Endothelial cell of umbilical vein (primary cell): ENCODE measurements at regions of chr11 and their contacts with region 1.

Region 1: DNA sequence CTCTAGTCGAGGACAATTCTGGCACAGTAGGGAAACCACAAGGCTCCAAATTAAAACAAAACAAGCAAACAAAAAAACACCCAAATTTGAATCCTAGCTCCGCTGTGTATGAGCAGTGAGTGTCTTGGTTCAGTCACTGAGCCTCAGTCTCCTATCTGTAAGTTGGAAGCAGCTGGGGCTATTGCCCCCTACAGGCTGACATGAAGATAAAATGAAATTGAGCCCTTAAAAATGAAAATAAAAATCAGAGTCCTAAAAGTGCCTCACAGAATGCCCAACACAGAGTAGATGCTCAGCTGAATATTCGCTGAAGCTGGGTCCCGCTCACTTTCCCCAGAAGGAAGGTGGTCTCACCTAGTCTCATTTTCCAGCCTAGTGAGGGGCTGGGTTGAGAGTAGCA is 65.2 kb downstream of the PDE2A start:
- DNase-seq: peak; percentile 21
- H3K4me3 ChIP-seq: no peak overlapping the region
- H3K27ac ChIP-seq: no peak overlapping the region
- H3K4me1 ChIP-seq: no peaks in the 10 kb centered on the region
- H3K27me3 ChIP-seq: no peaks in the 10 kb centered on the region
- CTCF ChIP-seq: peak; percentile 56 to 58
- POLR2A ChIP-seq: no peak

Region 2: GRCh38 chr11:72534565-72535547 is 74.2 kb before region 1 on chr11:
- CTCF ChIA-PET with region 1: no interaction called
- POLR2A ChIA-PET with region 1: no interaction called
- dilution Hi-C with region 1: no loop called
- intact Hi-C with region 1: no loop called
- DNase-seq: no peak
- H3K4me3 ChIP-seq: no peak overlapping the region
- H3K27ac ChIP-seq: no peak overlapping the region
- H3K4me1 ChIP-seq: no peaks in the 10 kb centered on the region
- H3K27me3 ChIP-seq: peaks cover 16 to 19% of the 10 kb centered on the region in 2 experiments
- CTCF ChIP-seq: no peak
- POLR2A ChIP-seq: no peak

Region 3: DNA sequence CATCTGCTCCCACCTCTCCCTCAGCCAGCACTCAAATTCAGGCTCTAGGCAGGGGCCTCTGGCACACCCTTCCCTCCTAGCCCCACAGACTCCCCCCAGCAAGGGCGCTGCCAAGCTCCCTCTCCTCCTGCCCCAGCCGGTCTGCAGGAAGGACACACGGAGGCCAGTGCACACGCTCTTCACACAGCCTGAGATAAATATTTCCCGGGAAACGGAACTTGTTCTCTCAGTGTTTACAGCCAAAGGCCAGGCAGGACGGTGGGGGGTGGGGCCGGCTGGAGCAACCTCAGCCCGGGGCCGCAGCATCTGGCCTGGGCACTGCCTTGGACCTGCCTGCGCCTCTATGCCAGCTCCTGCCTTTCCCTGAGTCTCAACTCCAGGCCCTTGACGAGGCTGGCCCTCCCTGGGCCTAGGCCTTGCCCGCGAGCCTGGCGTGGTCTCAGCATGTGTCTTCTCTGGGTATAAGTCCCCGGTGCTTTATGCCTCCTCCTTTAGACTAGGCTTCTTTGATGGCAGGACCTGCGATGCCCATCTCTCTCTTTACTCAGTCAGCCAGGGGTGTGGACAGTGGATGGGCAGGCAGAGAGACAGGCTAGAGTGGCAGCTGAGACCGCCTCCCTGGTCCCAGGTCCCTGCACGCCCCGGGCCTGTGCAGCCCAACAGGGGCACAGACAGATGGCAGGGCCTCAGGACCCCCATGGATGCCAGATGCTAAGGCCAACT is 16.8 kb after region 1 on chr11:
- CTCF ChIA-PET with region 1: interaction called, 18 read pairs
- POLR2A ChIA-PET with region 1: no interaction called
- dilution Hi-C with region 1: no loop called
- intact Hi-C with region 1: no loop called
- DNase-seq: peak; percentile 85
- H3K4me3 ChIP-seq: no peak overlapping the region
- H3K27ac ChIP-seq: peak overlapping the region; percentile 80
- H3K4me1 ChIP-seq: peaks cover 19% of the 10 kb centered on the region
- H3K27me3 ChIP-seq: no peaks in the 10 kb centered on the region
- CTCF ChIP-seq: no peak
- POLR2A ChIP-seq: no peak

Region 4: DNA sequence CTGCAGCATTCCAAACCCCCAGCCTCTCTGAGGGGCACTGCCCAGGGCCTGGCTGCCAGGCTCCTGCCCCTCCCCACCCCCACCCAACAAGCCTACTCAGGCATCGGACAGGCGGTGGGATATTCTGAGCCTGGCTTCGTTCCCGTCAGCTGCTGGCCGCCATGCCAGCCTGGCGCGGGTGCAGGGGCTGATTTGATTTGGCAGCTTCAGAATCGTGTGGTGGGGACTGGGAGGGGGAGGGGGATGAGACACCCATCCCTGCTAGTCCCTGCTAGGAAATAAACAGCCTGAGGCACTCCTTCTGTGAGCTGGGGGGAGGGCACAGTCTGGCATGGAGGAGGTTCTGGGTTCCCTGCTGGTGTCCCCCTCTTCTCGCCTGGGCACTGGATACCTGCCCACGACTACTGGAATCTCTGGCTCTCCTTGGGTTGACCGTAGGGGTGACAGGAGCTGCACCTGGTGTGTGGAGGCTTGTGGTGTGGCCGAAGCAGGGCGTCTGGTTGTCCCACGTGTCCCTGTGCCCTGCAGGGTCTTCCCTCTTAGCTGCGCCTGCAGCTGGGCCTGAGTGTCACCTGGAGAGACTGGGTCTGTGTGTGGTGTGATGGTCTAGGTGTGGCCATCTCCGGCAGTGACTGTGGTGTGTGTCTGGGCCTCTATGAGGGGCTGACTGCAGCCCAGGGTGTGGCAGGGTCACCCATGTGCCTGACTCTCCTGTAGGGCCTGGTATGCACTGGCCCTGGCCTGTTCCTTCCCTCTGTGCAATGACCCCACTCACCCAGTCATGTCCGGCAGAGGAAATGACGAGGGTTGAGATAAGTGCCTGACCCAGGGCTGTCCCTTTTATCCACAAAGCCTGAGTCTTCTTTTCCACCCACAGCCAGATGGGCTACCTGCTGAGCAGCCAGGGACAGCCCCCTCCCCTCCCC is 23.0 kb after region 1 on chr11:
- CTCF ChIA-PET with region 1: interaction called, 10 read pairs
- POLR2A ChIA-PET with region 1: no interaction called
- dilution Hi-C with region 1: no loop called
- intact Hi-C with region 1: no loop called
- DNase-seq: peak; percentile 86
- H3K4me3 ChIP-seq: no peak overlapping the region
- H3K27ac ChIP-seq: peak overlapping the region; percentile 83
- H3K4me1 ChIP-seq: peaks cover 38% of the 10 kb centered on the region
- H3K27me3 ChIP-seq: no peaks in the 10 kb centered on the region
- CTCF ChIP-seq: no peak
- POLR2A ChIP-seq: peak; percentile 76